Activated CD4-positive, alpha-beta T cell treated with anti-CD3 and anti-CD28 coated beads for 36 hours (primary cell): ENCODE measurements at regions of chr6 and their contacts with region 1.

Region 1: DNA sequence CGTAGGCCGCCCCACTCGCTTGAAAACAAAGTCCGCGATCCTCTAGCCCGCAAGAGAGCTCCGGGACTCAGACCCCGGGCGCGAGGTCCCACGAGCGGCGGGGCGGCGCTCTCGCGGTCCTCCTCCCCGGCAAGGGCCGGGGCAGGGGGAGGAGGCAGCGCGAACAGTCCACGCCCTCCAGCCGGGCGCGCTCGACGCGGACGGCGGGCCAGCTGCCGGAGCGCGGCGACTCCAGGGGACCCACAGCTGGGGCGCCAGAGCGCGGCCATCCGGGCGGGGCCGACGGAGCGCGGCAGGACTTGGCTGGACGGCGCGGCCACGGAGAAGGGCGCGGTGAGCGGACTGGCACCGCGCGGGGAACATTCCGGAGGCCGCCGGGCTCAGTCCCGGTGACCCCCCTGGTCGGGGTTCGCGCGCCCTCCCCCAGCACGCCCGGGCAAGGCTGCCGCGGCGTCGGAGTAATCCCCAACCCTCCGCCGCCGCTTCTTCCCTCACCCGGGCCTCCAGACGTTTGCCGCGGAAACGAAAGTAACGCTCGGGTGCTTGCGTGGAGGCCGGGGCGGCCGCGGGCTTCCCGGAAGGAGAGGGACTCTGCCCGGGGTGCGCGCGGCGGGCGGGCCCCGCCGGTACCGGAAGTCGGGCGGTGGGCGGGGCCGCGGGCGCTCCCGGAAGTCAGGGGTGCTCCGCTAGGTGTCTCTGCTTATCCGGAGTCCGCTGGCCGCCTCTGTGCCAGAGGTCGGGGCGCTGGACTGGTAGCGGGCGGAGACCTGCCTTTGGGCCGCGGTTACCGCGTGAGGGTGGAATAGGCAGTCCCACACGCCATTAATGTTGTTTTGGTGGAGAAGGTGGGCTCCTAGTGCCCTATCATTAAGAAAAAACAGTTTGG is at the start of gene RIPK1:
- DNase-seq: peak; percentile 97
- ATAC-seq: peak; percentile 84
- H3K4me3 Mint-ChIP-seq: peak within 1 kb of the TSS; percentile 96
- H3K27ac Mint-ChIP-seq: peak within 1 kb of the TSS; percentile 98
- H3K4me1 Mint-ChIP-seq: peaks cover 61% of the 10 kb centered on the region
- H3K27me3 Mint-ChIP-seq: no peaks in the 10 kb centered on the region
- total RNA-seq, gene RIPK1: 17.4 to 19.3 TPM

Region 2: DNA sequence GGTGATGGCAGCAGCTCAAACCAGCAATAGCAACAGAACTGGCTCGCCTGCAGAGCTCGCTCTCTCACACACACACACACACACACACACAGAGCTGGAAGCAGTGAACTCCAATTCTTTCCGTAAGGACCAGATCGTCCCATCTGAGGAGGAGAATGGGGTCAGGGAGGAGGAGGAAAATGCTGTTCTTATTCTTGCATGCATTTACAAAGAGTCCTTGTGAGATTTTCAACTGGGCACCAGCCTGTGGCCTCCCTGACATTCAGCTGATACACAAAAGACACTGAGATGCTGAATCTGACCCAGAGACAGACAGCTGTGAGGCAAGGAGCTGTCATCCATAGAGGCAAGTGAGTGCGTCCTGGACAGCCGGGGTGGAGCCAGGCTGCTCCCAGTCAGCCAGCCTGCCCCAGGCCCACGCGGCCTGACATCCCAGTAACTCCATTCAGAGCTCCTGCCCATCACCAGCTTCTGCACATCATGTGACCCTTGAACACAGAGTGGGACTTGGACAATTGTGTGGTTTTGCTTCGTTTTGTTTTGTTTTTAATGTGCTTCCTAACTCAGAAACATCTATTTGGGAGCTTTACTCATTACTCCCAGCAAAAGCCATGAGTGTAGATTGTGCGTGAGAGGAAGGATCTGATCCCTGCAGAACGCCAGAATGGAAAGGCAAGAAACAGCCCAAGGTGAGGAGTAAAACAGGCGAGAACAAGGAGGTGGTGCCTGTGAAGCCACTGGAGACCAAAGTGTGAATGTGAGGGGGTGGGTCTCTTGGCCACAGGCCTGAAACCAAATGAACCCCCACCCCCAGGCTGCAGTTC is 167.5 kb before region 1 on chr6:
- CTCF ChIA-PET with region 1: interaction called, 3 read pairs
- POLR2A ChIA-PET with region 1: no interaction called
- intact Hi-C with region 1: loop called in 1 of 2 experiments (anchors 5 kb)
- DNase-seq: peak; percentile 26
- ATAC-seq: no peak
- H3K4me3 Mint-ChIP-seq: peak overlapping the region; percentile 91
- H3K27ac Mint-ChIP-seq: peak overlapping the region; percentile 93
- H3K4me1 Mint-ChIP-seq: peaks cover 45% of the 10 kb centered on the region
- H3K27me3 Mint-ChIP-seq: no peaks in the 10 kb centered on the region

Region 3: DNA sequence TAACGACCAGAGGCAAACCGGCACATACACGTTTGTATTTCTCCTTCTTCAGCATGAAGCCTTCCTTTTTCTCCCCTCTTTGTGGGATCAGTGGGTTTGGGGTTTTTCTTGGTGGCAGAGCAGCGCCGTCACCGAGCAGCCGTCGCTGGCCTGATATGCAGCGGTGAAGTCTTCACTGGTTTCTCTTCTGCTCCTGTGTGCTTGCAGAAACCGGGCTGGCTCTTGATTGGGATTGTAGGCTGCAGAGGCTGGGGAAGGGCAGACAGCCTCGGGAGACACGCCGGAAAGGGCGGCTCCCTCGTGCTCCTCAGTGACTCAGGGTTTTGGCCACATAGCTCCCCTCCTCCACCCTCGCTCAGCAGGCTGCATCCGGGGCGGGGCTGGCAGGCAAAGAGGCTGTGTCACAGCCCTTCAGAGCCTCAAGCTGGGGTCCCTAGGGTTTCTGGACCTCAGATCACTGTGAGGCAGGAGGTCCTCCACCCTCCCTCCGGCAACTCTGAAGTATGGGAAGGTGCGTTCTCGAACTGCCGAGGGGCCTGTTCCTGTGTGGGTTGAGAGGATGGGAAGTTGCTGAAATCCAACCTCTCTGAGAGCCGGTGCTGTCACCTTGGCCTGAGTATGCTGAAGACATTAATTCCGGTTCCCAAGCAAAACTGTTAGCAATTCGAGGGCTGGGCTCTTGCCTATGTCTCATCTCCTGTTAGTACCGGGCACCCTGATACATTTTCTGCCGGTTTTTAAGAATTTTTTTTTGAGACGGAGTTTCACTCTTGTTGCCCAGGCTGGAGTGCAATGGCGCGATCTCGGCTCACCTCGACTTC is 44.7 kb before region 1 on chr6:
- CTCF ChIA-PET with region 1: interaction called, 3 read pairs
- POLR2A ChIA-PET with region 1: interaction called, 7 read pairs
- intact Hi-C with region 1: loop called in 1 of 2 experiments (anchors 1 kb)
- DNase-seq: peak; percentile 95
- ATAC-seq: peak; percentile 86
- H3K4me3 Mint-ChIP-seq: peak overlapping the region; percentile 78
- H3K27ac Mint-ChIP-seq: peak overlapping the region; percentile 95
- H3K4me1 Mint-ChIP-seq: peaks cover 62% of the 10 kb centered on the region
- H3K27me3 Mint-ChIP-seq: no peaks in the 10 kb centered on the region

Region 4: GRCh38 chr6:3039384-3039783 is 29.2 kb before region 1 on chr6:
- CTCF ChIA-PET with region 1: no interaction called
- POLR2A ChIA-PET with region 1: no interaction called
- intact Hi-C with region 1: no loop called
- DNase-seq: no peak
- ATAC-seq: no peak
- H3K4me3 Mint-ChIP-seq: no peak overlapping the region
- H3K27ac Mint-ChIP-seq: no peak overlapping the region
- H3K4me1 Mint-ChIP-seq: no peaks in the 10 kb centered on the region
- H3K27me3 Mint-ChIP-seq: no peaks in the 10 kb centered on the region

Region 5: DNA sequence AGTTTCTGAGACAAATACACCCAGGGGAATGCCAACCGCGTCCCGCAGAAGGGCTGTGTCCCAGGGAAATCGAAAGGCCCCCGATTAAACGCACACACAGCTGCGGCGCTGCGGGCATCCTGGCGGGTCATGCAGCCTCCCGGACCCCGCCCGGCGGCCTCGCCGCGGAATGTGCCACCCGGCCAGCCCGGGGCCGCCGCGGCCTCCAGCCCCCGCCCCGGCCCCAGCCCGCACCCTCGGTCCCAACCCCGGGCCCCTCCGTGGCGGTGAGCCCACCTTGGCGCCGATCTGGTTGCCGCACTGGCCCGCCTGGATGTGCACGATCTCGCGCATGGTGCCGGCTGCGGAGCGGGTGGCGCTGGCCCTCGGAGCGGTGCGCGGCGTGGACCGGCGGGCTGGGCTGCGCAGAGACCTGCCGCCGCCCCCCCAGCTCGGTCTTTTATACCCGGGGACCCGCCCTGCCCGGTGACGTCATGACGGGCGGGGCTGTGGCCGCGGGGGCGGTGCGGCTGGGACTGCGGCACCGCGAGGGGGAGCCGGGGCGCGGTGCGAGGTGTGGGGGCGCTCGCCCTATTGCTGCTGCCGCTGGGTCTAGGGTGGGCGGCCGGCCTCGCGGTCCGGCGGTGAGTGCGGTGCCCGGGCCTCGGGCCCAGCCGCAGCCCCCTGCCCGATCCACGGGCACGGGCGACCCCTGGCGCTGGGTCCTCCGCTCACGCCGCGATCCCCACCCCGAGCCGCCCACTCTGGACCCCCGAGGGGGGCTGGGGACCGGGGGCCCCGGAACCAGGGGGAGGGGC is 88.8 kb after region 1 on chr6 and contains the start of gene TUBB2A:
- CTCF ChIA-PET with region 1: no interaction called
- POLR2A ChIA-PET with region 1: no interaction called
- intact Hi-C with region 1: loop called in 1 of 2 experiments (anchors 1 kb)
- DNase-seq: peak; percentile 87
- ATAC-seq: peak; percentile 68
- H3K4me3 Mint-ChIP-seq: peak within 1 kb of the TSS; percentile 74
- H3K27ac Mint-ChIP-seq: peak within 1 kb of the TSS; percentile 55
- H3K4me1 Mint-ChIP-seq: peaks cover 25% of the 10 kb centered on the region
- H3K27me3 Mint-ChIP-seq: peaks cover 20% of the 10 kb centered on the region
- total RNA-seq, gene TUBB2A: 1.7 to 1.8 TPM

Region 6: DNA sequence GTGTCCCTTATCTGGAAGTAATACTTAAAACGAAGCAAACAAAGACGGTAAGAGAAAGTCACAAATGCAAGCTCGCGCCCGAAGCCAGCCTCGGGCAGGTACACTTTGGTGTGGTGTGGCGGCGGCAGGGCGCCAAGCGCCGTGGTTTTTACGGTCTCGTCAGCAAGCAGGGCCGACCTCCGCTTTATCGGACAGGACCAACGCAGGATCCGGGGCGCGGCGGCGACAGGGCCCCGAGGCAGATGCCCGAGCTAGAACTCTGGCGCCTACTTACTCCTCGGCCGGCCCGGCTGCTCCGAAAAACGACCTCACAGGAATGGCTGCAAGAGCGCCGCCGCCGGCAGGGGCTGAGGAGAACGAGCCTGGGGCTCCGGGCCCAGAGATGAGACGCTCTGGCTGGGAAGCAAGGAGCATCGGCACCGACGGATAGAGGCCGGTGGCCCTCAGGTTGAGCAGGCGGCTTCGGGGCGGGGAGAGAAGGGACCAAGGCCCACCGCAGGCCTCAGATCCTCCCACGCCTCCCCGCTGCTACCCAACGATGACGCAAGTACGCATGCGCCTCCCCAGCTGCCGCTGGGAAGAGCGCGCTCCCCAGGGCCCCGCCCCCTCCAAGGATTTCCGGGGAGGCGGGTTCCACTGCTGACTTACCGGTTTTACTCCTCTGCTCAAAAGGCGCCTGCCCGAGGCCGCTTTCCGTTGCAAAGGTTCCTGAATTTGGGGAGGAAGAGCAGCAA is 949.8 kb after region 1 on chr6:
- CTCF ChIA-PET with region 1: no interaction called
- POLR2A ChIA-PET with region 1: no interaction called
- intact Hi-C with region 1: loop called in 1 of 2 experiments (anchors 1 kb)
- DNase-seq: peak; percentile 99
- ATAC-seq: peak; percentile 65
- H3K4me3 Mint-ChIP-seq: peak overlapping the region; percentile 95
- H3K27ac Mint-ChIP-seq: peak overlapping the region; percentile 99
- H3K4me1 Mint-ChIP-seq: peaks cover 53% of the 10 kb centered on the region
- H3K27me3 Mint-ChIP-seq: no peaks in the 10 kb centered on the region